ENCODE measurements at regions of chr19 and their contacts with region 1.

Region 1: GRCh38 chr19:15154002-15154612 is 46.7 kb downstream of the NOTCH3 start:
- DNase-seq: no peak
- ATAC-seq: peak in 1 of 2 donors; percentile 36
- H3K4me3 ChIP-seq: no peak overlapping the region
- H3K27ac ChIP-seq: no peak overlapping the region
- H3K4me1 ChIP-seq: no peaks in the 10 kb centered on the region
- H3K27me3 ChIP-seq: peaks cover 0 to 3% (median 0%) of the 10 kb centered on the region in 3 donors
- CTCF ChIP-seq: peak in 3 of 5 experiments; percentile 30 to 47 (median 31)
- POLR2A ChIP-seq: no peak

Region 2: DNA sequence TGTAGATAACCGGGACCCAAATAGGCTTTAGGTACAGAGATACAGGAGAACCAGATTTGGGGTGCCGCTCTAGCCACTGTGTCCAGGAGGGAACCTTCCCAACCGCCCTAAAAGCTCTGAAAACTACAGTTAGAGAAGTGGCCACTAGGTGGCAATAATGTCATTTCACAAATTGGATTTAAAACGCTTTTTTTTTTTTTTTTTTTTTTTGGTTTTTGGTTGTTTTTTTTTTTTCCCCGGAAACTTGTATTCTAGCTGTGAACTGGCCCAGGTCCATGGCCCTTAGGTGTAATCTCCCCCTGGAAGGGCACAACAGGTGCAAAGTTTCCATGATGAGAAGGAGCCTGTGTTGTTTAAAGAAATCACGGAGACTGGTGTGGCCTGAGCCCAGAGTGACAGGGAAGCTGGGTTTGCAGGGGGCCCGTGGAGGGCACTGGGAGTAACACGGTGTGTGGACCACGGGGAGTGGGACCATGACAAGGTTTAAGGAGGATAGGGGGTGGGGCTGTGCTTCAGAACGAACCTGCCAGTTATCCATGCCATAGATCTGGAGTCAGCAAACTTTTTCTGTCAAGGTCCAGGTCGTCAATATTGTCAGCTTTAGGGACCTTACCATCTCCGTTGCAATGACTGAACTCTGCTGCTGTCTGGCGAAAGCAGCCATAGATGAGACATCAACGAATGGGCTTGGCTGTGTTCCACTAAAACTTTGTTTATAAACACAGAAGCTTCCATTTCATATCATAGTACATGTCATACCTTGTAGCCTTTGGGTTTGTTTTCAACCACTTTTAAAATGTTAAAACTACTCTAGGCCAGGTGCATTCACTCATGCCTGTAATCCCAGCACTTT is 62.0 kb before region 1 on chr19:
- in situ Hi-C with region 1: loop called in 3 of 4 experiments (anchors 5 to 10 kb)
- intact Hi-C with region 1: loop called (anchors 1 kb)
- DNase-seq: no peak
- ATAC-seq: peak in 1 of 2 donors; percentile 54
- H3K4me3 ChIP-seq: peak overlapping the region in 1 of 4 donors; percentile 6
- H3K27ac ChIP-seq: no peak overlapping the region
- H3K4me1 ChIP-seq: no peaks in the 10 kb centered on the region
- H3K27me3 ChIP-seq: peaks cover 0 to 7% (median 0%) of the 10 kb centered on the region in 3 donors
- CTCF ChIP-seq: peak; percentile 34 to 80 (median 61)
- POLR2A ChIP-seq: no peak

Region 3: DNA sequence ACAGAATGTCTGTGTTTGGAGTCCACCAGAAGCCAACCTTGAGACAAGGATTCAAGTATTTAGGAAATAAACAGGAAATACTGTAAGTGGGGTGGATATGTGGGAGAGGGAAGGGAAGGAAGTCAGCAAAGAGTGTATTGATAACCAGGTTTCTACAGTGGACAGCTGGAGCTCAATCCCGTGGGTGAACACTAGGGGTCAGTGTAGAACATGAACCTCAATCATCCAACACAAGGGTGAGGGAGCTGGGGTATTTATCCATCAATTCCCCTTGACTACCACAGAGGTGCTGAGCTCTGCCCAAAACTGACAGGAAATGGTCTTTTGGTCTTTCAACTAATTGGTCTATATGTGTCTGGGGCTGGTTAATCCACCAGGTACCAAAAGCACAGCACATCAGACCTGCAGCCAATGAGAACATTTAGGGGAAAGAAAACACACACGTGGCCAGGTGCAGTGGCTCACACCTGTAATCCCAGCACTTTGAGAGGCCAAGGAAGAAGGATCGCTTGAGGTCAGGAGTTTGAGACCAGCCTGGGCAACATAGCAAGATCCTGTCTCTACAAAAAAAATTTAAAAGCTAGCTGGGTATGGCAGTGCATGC is 52.5 kb before region 1 on chr19:
- in situ Hi-C with region 1: loop called in 1 of 4 experiments (anchors 10 kb)
- intact Hi-C with region 1: loop called (anchors 2 kb)
- DNase-seq: no peak
- ATAC-seq: no peak
- H3K4me3 ChIP-seq: no peak overlapping the region
- H3K27ac ChIP-seq: no peak overlapping the region
- H3K4me1 ChIP-seq: no peaks in the 10 kb centered on the region
- H3K27me3 ChIP-seq: peaks cover 0 to 18% (median 10%) of the 10 kb centered on the region in 3 donors
- CTCF ChIP-seq: peak in 4 of 5 experiments; percentile 35 to 63 (median 60)
- POLR2A ChIP-seq: no peak